ENCODE measurements at regions of chr7 and their contacts with region 1.

Region 1: GRCh38 chr7:88219781-88220747 is at the start of gene SRI:
- DNase-seq: peak; percentile 87
- H3K4me3 Mint-ChIP-seq: peak within 1 kb of the TSS; percentile 93
- H3K27ac Mint-ChIP-seq: peak within 1 kb of the TSS; percentile 95
- H3K4me1 Mint-ChIP-seq: peaks cover 43% of the 10 kb centered on the region
- H3K27me3 Mint-ChIP-seq: peaks cover 5% of the 10 kb centered on the region
- total RNA-seq, gene SRI: 173 and 185 TPM in 2 replicates

Region 2: GRCh38 chr7:87345166-87345927 is 874.7 kb before region 1 on chr7 and contains the start of gene CROT:
- intact Hi-C with region 1: loop called (anchors 5 kb)
- DNase-seq: peak; percentile 93
- H3K4me3 Mint-ChIP-seq: peak within 1 kb of the TSS; percentile 92
- H3K27ac Mint-ChIP-seq: peak within 1 kb of the TSS; percentile 89
- H3K4me1 Mint-ChIP-seq: peaks cover 57% of the 10 kb centered on the region
- H3K27me3 Mint-ChIP-seq: peaks cover 1% of the 10 kb centered on the region
- total RNA-seq, gene CROT: 5.9 and 6.5 TPM in 2 replicates

Region 3: DNA sequence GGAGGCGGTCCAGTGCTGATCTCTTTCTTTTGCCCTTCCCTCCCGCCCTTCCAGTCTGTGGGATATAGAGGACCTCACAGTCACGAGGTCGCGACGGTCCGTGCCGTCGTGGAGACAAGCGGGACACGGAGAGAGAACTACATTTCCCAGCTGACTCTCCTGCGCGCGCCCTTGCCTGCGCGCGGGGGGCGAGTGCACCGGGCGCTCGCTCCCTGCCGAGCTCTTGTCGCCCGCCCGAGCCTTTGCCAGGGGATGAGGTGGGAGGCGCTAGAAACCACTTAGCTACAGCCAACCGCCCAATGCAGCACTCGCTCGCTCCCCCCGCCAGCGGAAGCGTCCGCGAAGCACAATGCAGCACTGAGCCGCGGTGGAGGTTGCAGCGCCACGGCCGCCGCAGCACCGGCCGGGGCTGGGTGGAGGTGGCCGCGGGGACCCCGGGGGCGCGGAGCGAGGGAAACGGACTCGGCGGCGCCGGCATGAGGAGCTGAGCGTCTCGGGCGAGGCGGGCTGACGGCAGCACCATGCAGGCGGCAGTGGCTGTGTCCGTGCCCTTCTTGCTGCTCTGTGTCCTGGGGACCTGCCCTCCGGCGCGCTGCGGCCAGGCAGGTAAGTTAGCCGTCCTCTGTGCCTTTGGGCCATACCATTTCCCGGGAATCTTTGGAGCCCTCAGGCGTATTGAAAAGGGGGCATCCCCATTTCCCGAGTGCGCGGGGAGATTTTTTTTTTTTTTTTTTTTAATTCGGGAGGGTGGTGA is 285.9 kb before region 1 on chr7 and contains the start of gene ADAM22:
- intact Hi-C with region 1: loop called (anchors 2 kb)
- DNase-seq: peak; percentile 66
- H3K4me3 Mint-ChIP-seq: peak within 1 kb of the TSS; percentile 90
- H3K27ac Mint-ChIP-seq: peak within 1 kb of the TSS; percentile 40
- H3K4me1 Mint-ChIP-seq: peaks cover 6% of the 10 kb centered on the region
- H3K27me3 Mint-ChIP-seq: peaks cover 29% of the 10 kb centered on the region
- total RNA-seq, gene ADAM22: 1.4 and 1.5 TPM in 2 replicates

Region 4: DNA sequence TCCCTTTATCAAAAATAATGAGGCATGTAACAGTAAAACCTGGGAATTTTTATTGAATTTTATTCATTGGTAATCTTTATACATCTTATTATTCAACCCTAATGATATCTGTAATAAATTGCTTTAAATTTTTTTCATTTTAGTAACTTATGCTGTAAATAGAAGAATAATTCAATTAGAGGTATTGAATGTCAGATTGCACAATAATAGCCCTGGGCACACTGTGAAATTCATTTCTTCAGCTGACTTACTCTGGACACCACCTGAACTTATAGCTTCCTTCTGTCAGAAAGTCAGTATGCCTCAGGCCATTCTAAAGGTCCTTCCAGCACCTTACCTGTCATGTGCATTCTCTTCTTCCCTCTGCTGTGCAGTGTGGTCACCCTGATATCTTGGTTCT is 226.8 kb before region 1 on chr7:
- intact Hi-C with region 1: no loop called
- DNase-seq: no peak
- H3K4me3 Mint-ChIP-seq: no peak overlapping the region
- H3K27ac Mint-ChIP-seq: no peak overlapping the region
- H3K4me1 Mint-ChIP-seq: no peaks in the 10 kb centered on the region
- H3K27me3 Mint-ChIP-seq: no peaks in the 10 kb centered on the region

Region 5: DNA sequence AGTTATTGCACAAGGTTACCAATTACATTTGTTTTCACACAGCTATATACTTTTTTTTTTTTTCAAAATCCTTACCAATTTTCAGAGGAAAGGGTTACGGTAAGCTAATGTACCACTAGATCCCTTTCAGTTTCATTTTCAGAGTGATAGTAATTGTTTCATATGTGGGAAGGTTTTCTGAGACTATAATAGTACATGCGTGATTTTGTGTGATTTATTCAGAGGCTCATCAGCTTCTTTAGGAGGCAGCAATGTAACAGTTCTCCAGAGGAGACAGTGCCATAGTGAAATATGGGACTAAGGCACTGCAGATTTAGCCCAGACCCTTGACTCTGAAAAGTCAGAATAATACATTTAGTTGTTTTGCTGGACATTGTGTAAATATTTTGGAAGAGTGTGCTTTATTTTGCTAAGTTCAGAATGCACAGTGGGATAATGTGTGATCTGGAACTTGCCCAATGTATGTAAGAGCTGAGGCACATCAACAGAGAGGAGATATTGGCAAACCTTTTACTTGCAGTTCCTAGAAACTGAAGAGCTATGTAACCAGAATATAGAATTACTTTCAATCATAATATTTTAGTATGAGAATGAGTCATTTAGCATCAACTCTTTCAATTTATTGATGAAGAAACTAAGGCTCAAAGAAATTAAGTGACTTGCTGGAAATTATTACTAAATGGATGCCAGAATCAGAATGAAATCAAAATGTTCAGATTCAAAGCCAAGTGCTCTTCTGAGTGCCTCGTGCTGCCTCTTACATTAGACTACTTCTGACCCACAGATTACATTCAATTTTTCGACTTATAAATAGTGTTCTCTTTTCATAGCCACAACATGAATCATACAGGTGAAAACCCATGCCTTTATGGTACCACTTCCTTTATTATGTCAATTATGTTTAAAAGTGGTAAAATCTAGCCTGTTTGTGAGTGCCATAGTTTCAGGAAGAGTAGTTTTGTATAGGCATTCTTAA is 783.2 kb after region 1 on chr7:
- intact Hi-C with region 1: loop called (anchors 10 kb)
- DNase-seq: no peak
- H3K4me3 Mint-ChIP-seq: peak overlapping the region; percentile 77
- H3K27ac Mint-ChIP-seq: peak overlapping the region; percentile 84
- H3K4me1 Mint-ChIP-seq: peaks cover 17% of the 10 kb centered on the region
- H3K27me3 Mint-ChIP-seq: peaks cover 6% of the 10 kb centered on the region

Measured in activated T-helper 1 cell treated with anti-CD3 and anti-CD28 coated beads, Interleukin-12 subunit alpha, Interleukin-12 subunit beta, Interleukin-2, Interleukin-4 antibody, amounts not matched to agents 30 ng/mL and 10 ng/mL and 1 ng/mL, durations not matched to agents 14 hours and 24 hours and 36 hours (primary cell).